Right ventricle myocardium inferior (tissue), 1 donor: ENCODE measurements at regions of chr11 and their contacts with region 1.

Region 1: GRCh38 chr11:66616379-66617154 is at the start of gene RBM14:
- DNase-seq: peak; percentile 99
- ATAC-seq: peak; percentile 97
- total RNA-seq, gene RBM14: 30.1 TPM

Region 2: GRCh38 chr11:66505273-66505816 is 111.2 kb before region 1 on chr11:
- intact Hi-C with region 1: no loop called
- DNase-seq: no peak
- ATAC-seq: no peak

Region 3: GRCh38 chr11:66545701-66546367 is 70.7 kb before region 1 on chr11 and contains the start of gene ZDHHC24:
- intact Hi-C with region 1: no loop called
- DNase-seq: peak; percentile 99
- ATAC-seq: peak; percentile 98
- total RNA-seq, gene ZDHHC24: 4.0 TPM

Region 4: GRCh38 chr11:66592457-66593302 is 23.9 kb before region 1 on chr11 and contains the starts of genes CCDC87 and CCS:
- intact Hi-C with region 1: loop called (anchors 2 kb)
- DNase-seq: peak; percentile 100
- ATAC-seq: peak; percentile 95
- total RNA-seq, gene CCDC87: 0.27 TPM
- total RNA-seq, gene CCS: 23.5 TPM

Region 5: GRCh38 chr11:66638177-66639065 is 21.9 kb after region 1 on chr11 and contains the start of gene RBM4:
- intact Hi-C with region 1: loop called (anchors 1 kb)
- DNase-seq: peak; percentile 96
- ATAC-seq: peak; percentile 96
- total RNA-seq, gene RBM4: 72.1 TPM